ENCODE measurements at regions of chr19 and their contacts with region 1.

Region 1: DNA sequence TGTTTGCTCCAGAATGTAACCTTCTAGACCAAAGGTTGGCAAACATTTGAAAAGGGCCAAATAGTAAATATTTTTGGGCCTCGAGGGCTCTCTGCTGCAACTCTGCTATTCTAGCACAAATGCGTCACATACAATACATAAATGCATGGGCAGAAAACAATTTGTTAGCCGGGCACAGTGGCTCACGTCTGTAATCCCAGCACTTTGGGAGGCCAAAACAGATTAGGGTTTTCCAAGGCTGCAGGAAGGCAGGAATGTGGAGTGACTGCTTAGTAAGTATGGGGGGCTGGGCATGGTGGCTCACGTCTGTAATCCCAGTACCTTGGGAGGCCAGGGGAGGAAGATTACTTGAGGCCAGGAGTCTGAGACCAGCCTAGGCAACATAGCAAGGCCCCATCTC is 21.9 kb upstream of the EVI5L start:
- DNase-seq: no peak
- ATAC-seq: no peak
- H3K4me3 Mint-ChIP-seq: no peak overlapping the region
- H3K27ac Mint-ChIP-seq: peak overlapping the region; percentile 51
- H3K4me1 Mint-ChIP-seq: peaks cover 19% of the 10 kb centered on the region
- H3K27me3 Mint-ChIP-seq: peaks cover 5% of the 10 kb centered on the region
- CTCF ChIP-seq: no peak

Region 2: GRCh38 chr19:7348587-7349230 is 459.4 kb before region 1 on chr19 and contains the start of gene ARHGEF18:
- CTCF ChIA-PET with region 1: no interaction called
- POLR2A ChIA-PET with region 1: no interaction called
- intact Hi-C with region 1: loop called (anchors 5 kb)
- DNase-seq: peak; percentile 56
- ATAC-seq: peak; percentile 36
- H3K4me3 Mint-ChIP-seq: peak within 1 kb of the TSS; percentile 87
- H3K27ac Mint-ChIP-seq: peak within 1 kb of the TSS; percentile 95
- H3K4me1 Mint-ChIP-seq: peaks cover 90% of the 10 kb centered on the region
- H3K27me3 Mint-ChIP-seq: no peaks in the 10 kb centered on the region
- CTCF ChIP-seq: no peak
- total RNA-seq, gene ARHGEF18: 45.8 and 51.9 TPM in 2 replicates

Region 3: GRCh38 chr19:7868676-7869452 is 60.7 kb after region 1 on chr19:
- CTCF ChIA-PET with region 1: no interaction called
- POLR2A ChIA-PET with region 1: interaction called, 6 read pairs
- intact Hi-C with region 1: loop called (anchors 2 kb)
- DNase-seq: peak; percentile 83
- ATAC-seq: peak; percentile 75
- H3K4me3 Mint-ChIP-seq: peak overlapping the region; percentile 81
- H3K27ac Mint-ChIP-seq: peak overlapping the region; percentile 73
- H3K4me1 Mint-ChIP-seq: peaks cover 41% of the 10 kb centered on the region
- H3K27me3 Mint-ChIP-seq: peaks cover 30% of the 10 kb centered on the region
- CTCF ChIP-seq: peak; percentile 56

Measured in activated B cell treated with CpG ODN at 0.5 μM for 24 hours (primary cell).